Activated naive CD4-positive, alpha-beta T cell treated with anti-CD3 and anti-CD28 coated beads, Interleukin-2, amount 10 ng/mL, durations not matched to agents 7 days and 5 days (primary cell): ENCODE measurements at regions of chr14 and their contacts with region 1.

Region 1: GRCh38 chr14:100192672-100193416 is 33.4 kb upstream of the DEGS2 start:
- DNase-seq: peak; percentile 100
- H3K4me3 Mint-ChIP-seq: peak overlapping the region; percentile 63
- H3K27ac Mint-ChIP-seq: peak overlapping the region; percentile 84
- H3K4me1 Mint-ChIP-seq: peaks cover 20% of the 10 kb centered on the region
- H3K27me3 Mint-ChIP-seq: peaks cover 3% of the 10 kb centered on the region

Region 2: GRCh38 chr14:100049220-100049619 is 143.6 kb before region 1 on chr14:
- CTCF ChIA-PET with region 1: interaction called, 12 read pairs
- DNase-seq: no peak
- H3K4me3 Mint-ChIP-seq: no peak overlapping the region
- H3K27ac Mint-ChIP-seq: no peak overlapping the region
- H3K4me1 Mint-ChIP-seq: peaks cover 15% of the 10 kb centered on the region
- H3K27me3 Mint-ChIP-seq: no peaks in the 10 kb centered on the region

Region 3: DNA sequence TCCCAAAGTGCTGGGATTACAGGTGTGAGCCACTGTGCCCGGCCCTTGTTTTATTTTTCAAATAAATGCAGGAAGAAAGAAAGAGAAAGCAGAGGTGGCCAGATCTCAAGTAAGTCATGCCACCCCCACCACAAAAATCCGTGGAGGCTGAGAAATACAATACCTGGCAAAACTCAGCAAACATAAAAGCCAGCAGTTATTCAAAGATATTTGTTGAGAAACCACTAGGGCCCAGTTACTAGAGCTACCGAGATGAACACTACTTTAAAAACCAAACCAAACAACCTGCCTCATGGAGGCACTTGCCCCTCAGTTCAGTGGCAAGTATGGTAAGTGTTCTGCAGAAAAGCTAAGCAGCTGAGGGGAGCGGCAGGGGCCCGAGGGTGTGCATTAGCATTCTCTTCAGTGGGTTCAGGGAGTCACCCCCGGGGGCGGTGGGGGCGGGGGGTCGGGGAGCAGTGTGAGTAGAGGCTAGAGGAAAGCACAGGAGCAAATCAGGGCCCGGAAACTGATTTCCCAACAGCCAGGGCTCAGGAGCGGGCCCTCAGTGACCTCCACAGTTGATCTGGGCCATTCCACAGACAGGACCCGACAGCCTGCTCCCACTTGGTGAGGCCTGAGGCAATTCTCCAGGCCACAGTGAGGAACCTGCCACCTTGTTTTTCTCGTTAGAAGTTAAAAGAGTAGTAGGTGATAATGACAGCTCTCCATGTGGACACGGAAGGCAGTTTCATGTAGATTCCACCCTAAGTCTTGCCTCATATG is 119.1 kb before region 1 on chr14:
- CTCF ChIA-PET with region 1: interaction called, 20 read pairs
- DNase-seq: peak; percentile 41
- H3K4me3 Mint-ChIP-seq: peak overlapping the region; percentile 73
- H3K27ac Mint-ChIP-seq: peak overlapping the region; percentile 97
- H3K4me1 Mint-ChIP-seq: peaks cover 80% of the 10 kb centered on the region
- H3K27me3 Mint-ChIP-seq: no peaks in the 10 kb centered on the region

Region 4: GRCh38 chr14:100203949-100204834 is 11.3 kb after region 1 on chr14:
- CTCF ChIA-PET with region 1: interaction called, 21 read pairs
- DNase-seq: no peak
- H3K4me3 Mint-ChIP-seq: no peak overlapping the region
- H3K27ac Mint-ChIP-seq: no peak overlapping the region
- H3K4me1 Mint-ChIP-seq: no peaks in the 10 kb centered on the region
- H3K27me3 Mint-ChIP-seq: peaks cover 27% of the 10 kb centered on the region

Region 5: DNA sequence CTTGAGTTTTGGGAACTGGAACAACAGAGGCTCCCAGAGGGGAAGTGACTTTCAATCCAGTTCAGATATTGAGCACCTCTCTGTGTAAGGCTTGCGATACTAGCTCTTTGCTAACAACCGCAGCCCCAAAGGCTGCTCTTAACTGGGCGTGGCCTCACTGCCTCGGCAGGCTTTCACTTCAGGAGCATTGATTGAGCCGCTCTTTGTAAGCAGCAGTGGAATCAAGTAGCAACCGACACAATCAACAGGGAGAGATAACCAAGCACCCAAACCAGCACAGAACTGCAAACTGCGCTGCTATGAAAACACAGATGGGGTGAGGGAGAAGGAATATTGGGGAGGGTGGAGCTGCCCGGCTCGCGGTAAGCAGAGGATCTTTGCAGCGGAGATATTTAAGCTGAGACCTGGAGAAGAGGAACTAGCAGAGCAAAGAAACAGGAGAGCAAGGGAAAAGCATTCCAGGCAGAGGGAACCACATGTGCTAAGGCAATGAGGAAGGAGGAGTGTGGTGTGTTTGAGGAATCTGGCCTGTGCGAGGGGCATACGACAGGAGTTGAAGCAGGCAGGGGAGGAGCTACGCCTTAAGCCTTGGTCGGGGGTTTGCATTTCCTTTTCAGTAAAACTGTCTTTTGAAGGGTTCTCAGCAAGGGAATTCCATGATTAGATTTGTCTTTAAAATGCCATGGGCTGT is 28.8 kb after region 1 on chr14:
- CTCF ChIA-PET with region 1: interaction called, 58 read pairs
- DNase-seq: peak; percentile 85
- H3K4me3 Mint-ChIP-seq: no peak overlapping the region
- H3K27ac Mint-ChIP-seq: no peak overlapping the region
- H3K4me1 Mint-ChIP-seq: peaks cover 11% of the 10 kb centered on the region
- H3K27me3 Mint-ChIP-seq: no peaks in the 10 kb centered on the region